Mammary epithelial cell (primary cell): ENCODE measurements at regions of chr11 and their contacts with region 1.

Region 1: DNA sequence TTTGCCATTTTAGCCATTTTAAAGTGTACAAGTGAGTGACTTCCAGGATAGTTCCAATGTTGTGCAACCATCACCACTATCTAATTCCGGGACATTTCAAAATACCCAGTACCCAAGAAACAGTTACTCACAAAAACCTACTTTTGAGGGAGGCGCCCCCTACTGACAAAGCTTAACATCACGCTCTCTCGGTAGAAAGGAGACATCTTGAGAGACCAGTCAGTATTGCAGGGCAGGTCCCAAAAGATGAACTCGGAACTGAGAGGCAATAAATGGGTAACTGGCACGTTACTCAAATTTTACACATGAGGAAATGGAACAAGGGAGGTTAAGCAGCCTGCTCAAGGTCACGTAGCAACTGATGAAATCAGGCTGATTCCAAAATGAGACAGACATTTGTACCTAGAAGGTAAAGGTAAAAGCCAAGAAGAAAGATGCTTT is 50.0 kb upstream of the POU2AF1 start:
- DNase-seq: peak; percentile 44
- H3K4me3 ChIP-seq: no peak overlapping the region
- H3K27ac ChIP-seq: no peak overlapping the region
- H3K4me1 ChIP-seq: peaks cover 15% of the 10 kb centered on the region
- H3K27me3 ChIP-seq: no peaks in the 10 kb centered on the region
- CTCF ChIP-seq: peak; percentile 64 to 72

Region 2: GRCh38 chr11:111342329-111342728 is 86.8 kb before region 1 on chr11:
- CTCF ChIA-PET with region 1: no interaction called
- dilution Hi-C with region 1: no loop called
- in situ Hi-C with region 1: no loop called
- intact Hi-C with region 1: no loop called
- DNase-seq: no peak
- H3K4me3 ChIP-seq: no peak overlapping the region
- H3K27ac ChIP-seq: no peak overlapping the region
- H3K4me1 ChIP-seq: no peaks in the 10 kb centered on the region
- H3K27me3 ChIP-seq: no peaks in the 10 kb centered on the region
- CTCF ChIP-seq: no peak

Region 3: GRCh38 chr11:111379602-111380136 is 49.4 kb before region 1 on chr11:
- CTCF ChIA-PET with region 1: no interaction called
- dilution Hi-C with region 1: loop called (anchors 5 kb)
- in situ Hi-C with region 1: no loop called
- intact Hi-C with region 1: no loop called
- DNase-seq: no peak
- H3K4me3 ChIP-seq: no peak overlapping the region
- H3K27ac ChIP-seq: no peak overlapping the region
- H3K4me1 ChIP-seq: peaks cover 24% of the 10 kb centered on the region
- H3K27me3 ChIP-seq: no peaks in the 10 kb centered on the region
- CTCF ChIP-seq: no peak

Region 4: DNA sequence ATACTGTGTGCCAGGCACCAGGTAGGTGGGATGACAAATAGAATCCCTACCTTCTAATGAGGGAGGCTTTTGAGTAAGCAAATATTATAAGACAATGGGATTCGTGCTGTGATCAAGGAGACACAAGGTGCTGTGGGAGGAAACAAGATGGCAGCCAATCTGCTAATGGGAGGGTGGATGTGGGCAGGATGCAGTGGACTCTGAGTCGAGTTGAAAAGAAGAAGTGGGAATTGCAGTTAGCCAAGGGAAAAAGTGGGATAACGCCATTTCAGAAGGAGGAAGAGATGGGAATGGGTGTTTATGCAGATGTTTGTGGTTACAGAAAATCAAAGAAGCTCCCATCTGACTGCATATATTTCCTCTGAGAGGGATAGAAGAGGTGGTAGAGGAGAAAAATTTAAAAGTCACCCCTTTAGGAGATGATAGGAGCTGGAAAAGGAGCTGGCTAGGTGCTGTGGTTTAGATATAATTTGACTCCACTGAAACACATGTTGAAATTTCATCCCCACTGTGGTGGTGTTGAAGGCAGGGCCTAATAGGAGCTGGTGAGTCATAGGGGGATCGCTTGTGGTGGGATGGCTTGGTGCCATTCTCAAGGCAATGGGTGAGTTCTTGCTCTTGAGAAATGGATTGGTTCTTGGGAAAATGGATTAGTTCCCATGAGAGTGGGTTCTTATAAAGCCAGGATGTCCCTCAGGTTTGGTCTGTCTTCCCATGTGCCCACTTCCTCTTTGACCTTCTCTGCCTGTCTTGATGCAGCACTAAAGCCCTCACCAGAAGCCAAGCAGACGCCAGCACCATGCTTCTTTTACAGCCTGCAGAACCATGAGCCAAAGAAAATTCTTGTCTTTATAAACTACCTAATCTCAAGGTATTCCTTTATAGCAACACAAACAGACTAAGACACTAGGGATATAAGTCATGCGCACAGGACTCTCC is 20.0 kb before region 1 on chr11:
- CTCF ChIA-PET with region 1: no interaction called
- dilution Hi-C with region 1: no loop called
- in situ Hi-C with region 1: no loop called
- intact Hi-C with region 1: no loop called
- DNase-seq: peak; percentile 27
- H3K4me3 ChIP-seq: no peak overlapping the region
- H3K27ac ChIP-seq: no peak overlapping the region
- H3K4me1 ChIP-seq: no peaks in the 10 kb centered on the region
- H3K27me3 ChIP-seq: no peaks in the 10 kb centered on the region
- CTCF ChIP-seq: no peak

Region 5: DNA sequence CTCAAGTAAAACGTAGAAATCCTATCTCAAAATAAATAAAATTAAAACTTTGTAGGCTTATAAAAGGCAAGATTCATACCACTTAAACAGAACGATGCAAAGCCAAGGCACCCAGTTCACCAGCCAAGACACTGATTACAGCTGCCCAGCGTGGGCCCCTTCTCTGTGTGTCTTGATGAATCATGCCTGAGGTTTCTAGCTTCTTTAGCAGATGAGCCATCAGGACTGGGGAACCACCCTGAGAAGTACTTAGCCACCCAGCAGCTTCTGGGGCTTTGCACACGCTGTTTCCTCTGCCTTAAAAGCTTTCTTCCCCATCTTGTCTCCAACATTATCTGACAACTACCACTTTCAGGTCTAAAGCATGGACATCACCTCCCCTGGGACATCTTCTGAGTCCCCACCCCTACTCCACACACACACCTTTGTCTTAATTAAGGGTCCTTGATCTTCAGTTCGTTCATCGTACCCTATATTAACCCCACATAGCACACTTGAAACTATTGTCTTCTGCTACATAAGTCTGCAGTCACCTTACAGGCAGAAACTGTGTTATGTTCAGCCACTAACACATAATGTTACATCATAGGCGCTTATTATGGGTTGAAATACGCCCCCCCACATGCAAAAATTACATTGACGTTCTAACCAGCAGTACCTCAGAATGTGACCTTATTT is 102.7 kb after region 1 on chr11:
- CTCF ChIA-PET with region 1: no interaction called
- dilution Hi-C with region 1: no loop called
- in situ Hi-C with region 1: no loop called
- intact Hi-C with region 1: no loop called
- DNase-seq: peak; percentile 96
- H3K4me3 ChIP-seq: no peak overlapping the region
- H3K27ac ChIP-seq: peak overlapping the region; percentile 88
- H3K4me1 ChIP-seq: peaks cover 33% of the 10 kb centered on the region
- H3K27me3 ChIP-seq: no peaks in the 10 kb centered on the region
- CTCF ChIP-seq: no peak

Region 6: GRCh38 chr11:111676878-111677585 is 247.9 kb after region 1 on chr11:
- CTCF ChIA-PET with region 1: no interaction called
- dilution Hi-C with region 1: no loop called
- in situ Hi-C with region 1: no loop called
- intact Hi-C with region 1: no loop called
- DNase-seq: peak; percentile 60
- H3K4me3 ChIP-seq: no peak overlapping the region
- H3K27ac ChIP-seq: no peak overlapping the region
- H3K4me1 ChIP-seq: peaks cover 6% of the 10 kb centered on the region
- H3K27me3 ChIP-seq: no peaks in the 10 kb centered on the region
- CTCF ChIP-seq: no peak